Activated T-helper 2 cell treated with anti-CD3 and anti-CD28 coated beads, Interferon-gamma antibody, Interleukin-2, Interleukin-4, amounts not matched to agents 10 μg/mL and 5 μg/mL and 100 μg/mL, durations not matched to agents 14 hours and 24 hours and 36 hours (primary cell): ENCODE measurements at regions of chr22 and their contacts with region 1.

Region 1: GRCh38 chr22:38705235-38706100 is at the start of gene GTPBP1:
- DNase-seq: peak; percentile 98
- H3K4me3 Mint-ChIP-seq: peak within 1 kb of the TSS; percentile 91
- H3K27ac Mint-ChIP-seq: peak within 1 kb of the TSS; percentile 100
- H3K4me1 Mint-ChIP-seq: peaks cover 41% of the 10 kb centered on the region
- H3K27me3 Mint-ChIP-seq: no peaks in the 10 kb centered on the region
- total RNA-seq, gene GTPBP1: 101 and 106 TPM in 2 replicates

Region 2: DNA sequence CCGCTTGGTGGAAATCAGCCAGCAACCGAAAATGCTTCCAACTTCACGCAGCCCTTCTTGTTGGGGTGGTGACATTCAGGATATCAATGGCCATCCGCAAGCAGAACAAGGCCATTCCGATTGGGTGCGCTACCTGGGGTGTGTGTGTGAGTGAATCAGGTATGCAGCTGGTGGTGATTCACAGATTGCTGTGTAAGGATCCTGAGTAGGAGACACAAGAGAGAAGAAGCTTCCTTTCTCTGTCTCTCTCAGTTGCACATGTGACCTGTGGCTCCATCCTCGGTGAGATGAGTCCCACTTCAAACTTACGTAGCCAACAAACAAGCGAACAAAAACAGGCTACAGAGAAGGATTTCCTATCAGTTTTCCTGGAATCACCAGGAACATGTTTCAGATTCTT is 423.1 kb before region 1 on chr22:
- intact Hi-C with region 1: no loop called
- DNase-seq: no peak
- H3K4me3 Mint-ChIP-seq: no peak overlapping the region
- H3K27ac Mint-ChIP-seq: no peak overlapping the region
- H3K4me1 Mint-ChIP-seq: no peaks in the 10 kb centered on the region
- H3K27me3 Mint-ChIP-seq: no peaks in the 10 kb centered on the region

Region 3: DNA sequence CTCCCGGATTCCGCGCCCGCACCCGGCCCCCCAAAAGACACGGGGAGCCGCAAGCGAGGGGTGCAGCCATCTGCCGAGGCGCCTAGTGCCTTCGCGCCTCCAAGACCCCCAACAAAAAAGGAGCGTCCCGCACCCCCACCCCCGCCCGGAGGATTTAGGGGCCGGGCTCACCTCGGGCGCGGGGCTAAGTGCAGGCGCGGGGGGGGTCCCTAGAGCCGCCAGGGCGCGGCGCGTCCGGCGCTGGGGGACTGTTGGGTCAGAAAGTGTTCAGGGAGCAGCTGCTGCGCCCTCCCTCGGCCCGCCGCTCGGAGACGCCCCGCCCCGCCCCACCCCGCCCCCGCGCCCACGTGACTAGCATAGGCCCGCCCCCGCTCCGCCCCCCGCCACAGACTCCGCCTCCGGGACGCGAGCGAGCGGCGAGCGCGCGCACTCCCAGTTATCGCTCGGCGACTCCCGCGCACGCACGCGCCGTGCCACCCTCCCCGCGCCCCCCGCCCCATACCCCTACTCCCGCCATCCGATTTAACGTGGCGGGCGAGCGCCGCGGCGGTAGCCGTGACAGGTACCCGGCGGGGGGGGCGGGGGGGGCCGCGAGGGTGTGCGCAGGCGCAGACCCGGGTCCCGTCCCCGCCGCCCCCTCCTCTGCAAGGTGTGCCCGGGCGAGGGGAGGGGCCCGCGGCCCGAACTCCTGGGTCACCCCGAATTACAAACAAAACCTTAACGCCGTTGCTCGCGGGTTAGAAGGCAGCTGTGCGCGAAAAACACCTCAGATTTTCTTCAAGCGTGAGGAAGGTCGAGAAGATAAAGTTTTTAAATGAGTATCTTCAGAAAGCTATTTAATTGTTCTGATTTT is 306.6 kb before region 1 on chr22:
- intact Hi-C with region 1: loop called (anchors 10 kb)
- DNase-seq: peak; percentile 75
- H3K4me3 Mint-ChIP-seq: peak overlapping the region; percentile 82
- H3K27ac Mint-ChIP-seq: no peak overlapping the region
- H3K4me1 Mint-ChIP-seq: peaks cover 40% of the 10 kb centered on the region
- H3K27me3 Mint-ChIP-seq: peaks cover 21% of the 10 kb centered on the region

Region 4: DNA sequence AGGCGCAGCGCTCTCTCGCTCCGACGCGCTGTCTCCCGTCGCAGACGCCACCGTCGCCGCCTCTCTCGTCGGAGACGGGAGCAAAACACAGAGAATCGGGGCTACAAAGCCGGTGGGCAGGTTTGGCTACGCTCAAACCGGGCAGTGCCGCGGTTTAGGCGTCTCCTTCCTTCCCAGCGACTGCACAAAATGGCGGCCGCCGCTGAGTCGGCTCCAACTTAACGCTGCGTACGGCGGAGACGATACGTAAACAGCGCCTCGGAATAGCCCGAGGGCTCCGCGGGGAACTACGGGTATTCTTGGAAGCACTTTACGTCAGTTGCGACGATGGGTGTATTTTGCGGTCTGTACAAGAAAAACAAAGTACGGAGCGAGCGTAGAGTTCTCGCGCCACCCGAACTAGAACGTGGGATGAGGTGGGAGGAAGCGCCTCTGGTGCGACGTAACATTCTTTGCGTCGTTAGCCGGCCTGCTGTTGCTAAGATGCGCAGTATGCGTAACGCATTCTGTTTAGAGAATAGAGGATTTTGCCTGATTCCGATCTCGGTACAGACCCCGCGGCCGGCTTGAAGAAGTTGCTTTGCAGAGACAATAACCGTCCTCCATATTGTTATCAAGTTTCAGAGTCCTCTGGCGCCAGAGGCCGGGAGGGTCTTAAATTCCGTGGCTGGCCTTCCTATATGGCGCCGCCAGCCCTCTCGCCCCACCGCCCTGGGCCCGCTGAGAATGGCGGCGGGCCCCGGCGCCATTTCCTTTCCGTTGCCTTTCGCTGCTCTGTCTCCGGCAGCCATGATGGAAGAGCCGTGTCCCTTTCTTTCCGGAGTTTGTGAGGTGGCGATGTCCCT is 199.1 kb before region 1 on chr22 and contains the start of gene DDX17:
- intact Hi-C with region 1: loop called (anchors 5 kb)
- DNase-seq: peak; percentile 94
- H3K4me3 Mint-ChIP-seq: peak within 1 kb of the TSS; percentile 99
- H3K27ac Mint-ChIP-seq: peak within 1 kb of the TSS; percentile 100
- H3K4me1 Mint-ChIP-seq: peaks cover 36% of the 10 kb centered on the region
- H3K27me3 Mint-ChIP-seq: no peaks in the 10 kb centered on the region
- total RNA-seq, gene DDX17: 378 and 391 TPM in 2 replicates

Region 5: GRCh38 chr22:38569972-38570778 is 135.3 kb before region 1 on chr22 and contains the start of gene DMC1:
- intact Hi-C with region 1: loop called (anchors 10 kb)
- DNase-seq: peak; percentile 88
- H3K4me3 Mint-ChIP-seq: peak within 1 kb of the TSS; percentile 94
- H3K27ac Mint-ChIP-seq: peak within 1 kb of the TSS; percentile 95
- H3K4me1 Mint-ChIP-seq: peaks cover 23% of the 10 kb centered on the region
- H3K27me3 Mint-ChIP-seq: no peaks in the 10 kb centered on the region
- total RNA-seq, gene DMC1: 10.8 and 13.6 TPM in 2 replicates

Region 6: GRCh38 chr22:38656256-38657044 is 49.0 kb before region 1 on chr22 and contains the starts of genes CBY1 and FAM227A:
- intact Hi-C with region 1: loop called (anchors 2 kb)
- DNase-seq: peak; percentile 83
- H3K4me3 Mint-ChIP-seq: peak within 1 kb of the TSS; percentile 85
- H3K27ac Mint-ChIP-seq: peak within 1 kb of the TSS; percentile 87
- H3K4me1 Mint-ChIP-seq: peaks cover 10% of the 10 kb centered on the region
- H3K27me3 Mint-ChIP-seq: no peaks in the 10 kb centered on the region
- total RNA-seq, gene CBY1: 10.3 and 11.2 TPM in 2 replicates
- total RNA-seq, gene FAM227A: 0.05 and 0.28 TPM in 2 replicates

Region 7: DNA sequence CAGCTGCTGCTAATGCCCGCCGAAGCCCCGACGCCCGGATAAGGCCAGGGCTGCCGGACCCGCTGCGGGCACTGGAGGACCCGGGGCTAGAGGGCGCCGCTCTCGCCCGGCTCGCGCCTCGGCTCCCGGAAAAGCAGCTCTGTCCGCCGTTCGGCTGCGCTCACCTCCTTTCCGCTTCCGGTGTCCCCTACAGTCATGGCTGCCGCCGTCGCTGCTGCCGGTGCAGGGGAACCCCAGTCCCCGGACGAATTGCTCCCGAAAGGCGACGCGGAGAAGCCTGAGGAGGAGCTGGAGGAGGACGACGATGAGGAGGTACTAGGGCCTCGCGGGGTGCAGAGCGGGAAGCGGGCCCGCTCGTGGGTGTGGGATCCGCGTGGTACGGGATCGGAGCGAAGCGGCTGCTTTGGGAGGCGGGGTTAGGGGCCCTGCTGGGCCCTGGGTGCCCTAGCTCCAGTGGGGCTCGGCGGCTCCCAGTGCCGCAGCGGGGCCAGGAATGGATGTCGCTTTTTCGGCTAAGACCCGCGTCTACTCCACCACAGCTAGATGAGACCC is 23.6 kb before region 1 on chr22 and contains the start of gene TOMM22:
- intact Hi-C with region 1: loop called (anchors 2 kb)
- DNase-seq: peak; percentile 82
- H3K4me3 Mint-ChIP-seq: peak within 1 kb of the TSS; percentile 97
- H3K27ac Mint-ChIP-seq: peak within 1 kb of the TSS; percentile 95
- H3K4me1 Mint-ChIP-seq: peaks cover 11% of the 10 kb centered on the region
- H3K27me3 Mint-ChIP-seq: no peaks in the 10 kb centered on the region
- total RNA-seq, gene TOMM22: 128 and 138 TPM in 2 replicates

Region 8: DNA sequence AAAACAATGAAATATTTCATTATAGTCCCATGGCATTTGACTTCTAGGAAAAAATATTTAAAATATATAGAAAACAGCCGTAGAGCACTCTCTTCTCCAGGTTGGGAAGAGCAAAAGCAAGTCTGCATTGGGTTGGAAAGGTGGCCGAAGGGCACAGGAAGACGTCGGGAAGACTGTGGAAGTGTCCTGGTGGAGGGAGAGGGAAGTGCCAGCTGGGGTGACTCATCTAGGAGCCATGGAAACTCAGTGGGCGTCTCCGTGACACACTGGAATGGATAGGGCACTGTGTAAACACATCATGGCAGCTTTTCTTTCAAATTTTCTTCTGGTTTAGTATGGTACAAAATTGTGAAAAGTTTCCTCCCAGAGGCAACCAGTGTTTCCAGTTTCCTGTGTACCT is 12.9 kb after region 1 on chr22:
- intact Hi-C with region 1: no loop called
- DNase-seq: no peak
- H3K4me3 Mint-ChIP-seq: no peak overlapping the region
- H3K27ac Mint-ChIP-seq: no peak overlapping the region
- H3K4me1 Mint-ChIP-seq: peaks cover 10% of the 10 kb centered on the region
- H3K27me3 Mint-ChIP-seq: no peaks in the 10 kb centered on the region

Region 9: GRCh38 chr22:38733329-38733723 is 27.9 kb after region 1 on chr22:
- intact Hi-C with region 1: no loop called
- DNase-seq: no peak
- H3K4me3 Mint-ChIP-seq: no peak overlapping the region
- H3K27ac Mint-ChIP-seq: peak overlapping the region; percentile 58
- H3K4me1 Mint-ChIP-seq: peaks cover 16% of the 10 kb centered on the region
- H3K27me3 Mint-ChIP-seq: no peaks in the 10 kb centered on the region

Region 10: DNA sequence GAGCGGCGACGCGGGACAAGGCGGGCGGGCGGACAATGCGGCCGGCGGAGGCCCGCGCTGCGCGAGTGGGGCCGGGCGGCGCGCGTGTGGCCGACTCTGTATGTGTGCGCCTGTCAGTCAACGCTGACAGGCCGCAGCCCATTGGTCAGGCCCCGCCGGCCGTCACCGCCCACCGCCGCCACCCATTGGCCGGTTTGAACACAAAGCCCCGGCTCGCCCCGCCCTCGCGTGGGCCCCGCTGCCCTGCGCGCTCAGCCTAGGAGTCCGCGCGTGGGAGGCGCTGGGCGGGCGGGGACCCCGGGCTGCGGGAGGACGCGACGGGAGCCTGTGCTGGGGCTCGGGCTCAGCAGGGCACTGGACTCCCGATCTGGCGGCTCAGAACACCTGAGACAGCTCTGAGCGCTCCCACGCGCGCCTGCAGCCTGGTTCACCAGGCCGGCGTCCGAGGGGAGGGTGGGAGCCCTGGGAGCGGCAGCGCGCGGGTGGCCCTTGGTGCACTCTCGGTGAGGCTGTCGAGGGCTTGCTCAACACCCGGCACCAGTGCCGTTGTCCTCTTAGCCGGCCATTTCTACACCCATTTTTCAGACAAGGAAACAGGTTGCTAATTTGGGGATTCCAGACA is 50.6 kb after region 1 on chr22 and contains the start of gene SUN2:
- intact Hi-C with region 1: loop called (anchors 1 kb)
- DNase-seq: peak; percentile 91
- H3K4me3 Mint-ChIP-seq: peak within 1 kb of the TSS; percentile 96
- H3K27ac Mint-ChIP-seq: peak within 1 kb of the TSS; percentile 95
- H3K4me1 Mint-ChIP-seq: peaks cover 49% of the 10 kb centered on the region
- H3K27me3 Mint-ChIP-seq: no peaks in the 10 kb centered on the region
- total RNA-seq, gene SUN2: 121 and 123 TPM in 2 replicates

Region 11: DNA sequence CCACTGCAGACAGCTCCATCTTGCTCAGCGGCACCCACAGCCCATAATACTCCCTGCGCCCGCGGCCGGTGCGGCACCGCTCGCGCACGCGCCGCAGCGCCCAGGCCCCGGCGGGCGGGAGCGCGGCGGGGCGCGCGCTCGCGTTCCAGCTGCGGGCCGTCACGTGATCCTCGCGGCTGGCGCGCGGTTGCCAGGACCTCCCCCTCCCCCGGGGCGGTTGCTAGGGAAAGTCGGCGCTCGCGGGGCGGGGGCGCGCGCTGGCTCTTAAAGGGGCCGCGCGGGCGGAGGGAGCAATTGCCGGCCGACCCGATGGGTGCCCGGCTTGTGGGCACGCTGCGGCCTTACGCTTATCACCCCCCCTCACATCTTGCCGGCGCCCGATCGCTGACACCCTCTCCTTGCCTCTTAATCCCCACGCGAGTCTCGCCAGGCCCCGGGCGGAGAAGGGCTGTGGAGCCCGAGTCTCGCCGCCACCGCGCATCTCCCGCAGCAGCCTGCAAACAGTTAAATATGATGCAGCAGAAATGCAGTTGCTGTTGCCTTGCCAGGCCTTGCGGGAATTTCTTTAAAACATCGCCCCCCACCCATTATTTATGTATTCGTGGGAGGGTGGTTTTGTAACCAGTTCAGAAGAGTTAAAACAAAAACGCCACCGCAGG is 166.8 kb after region 1 on chr22 and contains the start of gene CBX6:
- intact Hi-C with region 1: no loop called
- DNase-seq: peak; percentile 92
- H3K4me3 Mint-ChIP-seq: peak within 1 kb of the TSS; percentile 91
- H3K27ac Mint-ChIP-seq: peak within 1 kb of the TSS; percentile 80
- H3K4me1 Mint-ChIP-seq: peaks cover 36% of the 10 kb centered on the region
- H3K27me3 Mint-ChIP-seq: peaks cover 23% of the 10 kb centered on the region
- total RNA-seq, gene CBX6: 117 and 120 TPM in 2 replicates